ENCODE measurements at regions of chr18 and their contacts with region 1.

Region 1: DNA sequence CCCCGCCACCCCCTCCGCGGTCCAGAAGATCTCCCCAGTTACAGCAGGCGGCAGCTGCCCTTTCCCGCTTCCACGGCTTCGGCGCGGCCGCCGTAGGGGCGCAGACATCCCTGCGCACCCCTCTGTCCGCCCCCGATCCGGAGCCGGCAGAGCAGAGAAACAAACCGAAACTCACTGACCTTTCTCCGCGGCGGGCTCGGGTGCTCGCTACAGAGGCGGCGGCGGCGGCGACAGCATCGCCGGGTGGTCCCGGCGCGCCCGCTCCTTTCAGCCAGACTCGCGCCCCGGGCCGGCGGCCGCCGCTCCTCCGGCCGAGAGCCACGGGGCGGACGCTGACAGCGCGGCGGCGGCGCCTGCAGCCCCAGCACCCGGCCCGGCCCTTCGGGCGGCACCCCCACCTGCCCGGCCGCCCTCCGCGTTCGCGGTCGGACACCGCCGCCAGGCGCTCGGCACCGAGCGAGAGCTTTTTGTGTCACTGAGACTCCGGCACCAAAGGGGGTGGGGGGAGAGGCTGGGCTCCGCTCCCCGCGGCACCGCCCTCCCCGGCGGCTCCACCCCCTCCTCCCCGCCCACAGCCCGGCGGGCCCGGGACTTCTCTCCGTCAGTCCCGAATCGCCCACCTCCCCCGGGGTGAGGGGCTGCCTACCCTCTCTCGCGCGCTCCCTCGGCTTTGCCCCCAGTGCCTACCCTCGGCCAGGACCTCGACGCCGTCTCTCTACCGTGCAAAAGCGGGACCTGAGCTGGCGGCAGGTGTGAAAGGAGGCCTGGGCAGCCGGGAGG is 1.4 kb upstream of the RNF152 start:
- DNase-seq: peak; percentile 53
- H3K4me3 Mint-ChIP-seq: peak overlapping the region; percentile 82
- H3K27ac Mint-ChIP-seq: no peak overlapping the region
- H3K4me1 Mint-ChIP-seq: peaks cover 13% of the 10 kb centered on the region
- H3K27me3 Mint-ChIP-seq: peaks cover 65% of the 10 kb centered on the region

Region 2: GRCh38 chr18:61551586-61551985 is 342.6 kb before region 1 on chr18:
- intact Hi-C with region 1: loop called (anchors 10 kb)
- DNase-seq: no peak
- H3K4me3 Mint-ChIP-seq: no peak overlapping the region
- H3K27ac Mint-ChIP-seq: no peak overlapping the region
- H3K4me1 Mint-ChIP-seq: peaks cover 4% of the 10 kb centered on the region
- H3K27me3 Mint-ChIP-seq: peaks cover 6% of the 10 kb centered on the region

Region 3: DNA sequence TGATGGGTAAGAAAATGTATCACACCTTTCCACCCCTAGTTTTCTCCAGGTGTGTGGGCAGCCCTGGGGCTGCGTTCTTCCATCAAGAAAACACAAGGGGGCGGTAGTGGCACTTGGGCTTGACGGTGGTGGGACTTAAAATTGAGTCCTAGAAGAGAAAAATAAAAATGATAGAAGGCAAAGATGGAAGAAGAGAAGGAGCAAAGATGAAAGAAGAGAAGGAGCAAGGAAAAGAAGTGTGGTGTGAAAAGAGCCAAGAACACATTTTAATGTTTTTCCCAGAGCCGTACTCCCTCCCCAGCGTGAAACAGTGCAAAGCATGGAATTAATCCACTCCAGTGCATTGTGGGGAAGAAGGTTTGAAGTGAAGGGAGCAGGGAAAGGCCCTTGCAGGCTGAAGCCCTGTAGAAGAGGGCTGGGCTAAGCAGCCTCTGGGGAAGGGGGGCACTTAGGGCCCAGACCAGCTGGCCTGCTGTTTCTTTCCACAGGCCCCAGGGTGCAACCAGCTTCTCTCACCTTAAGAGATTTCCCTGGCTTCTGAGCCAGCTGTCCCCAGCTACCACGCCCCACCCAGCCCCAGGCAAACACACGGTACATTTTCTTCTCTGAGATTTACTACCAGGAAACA is 258.1 kb before region 1 on chr18:
- intact Hi-C with region 1: loop called (anchors 5 kb)
- DNase-seq: peak; percentile 6
- H3K4me3 Mint-ChIP-seq: no peak overlapping the region
- H3K27ac Mint-ChIP-seq: no peak overlapping the region
- H3K4me1 Mint-ChIP-seq: no peaks in the 10 kb centered on the region
- H3K27me3 Mint-ChIP-seq: peaks cover 6% of the 10 kb centered on the region

Region 4: GRCh38 chr18:61754039-61754583 is 140.1 kb before region 1 on chr18:
- intact Hi-C with region 1: no loop called
- DNase-seq: no peak
- H3K4me3 Mint-ChIP-seq: no peak overlapping the region
- H3K27ac Mint-ChIP-seq: no peak overlapping the region
- H3K4me1 Mint-ChIP-seq: no peaks in the 10 kb centered on the region
- H3K27me3 Mint-ChIP-seq: peaks cover 12% of the 10 kb centered on the region